ENCODE measurements at regions of chr20 and their contacts with region 1.

Region 1: GRCh38 chr20:32902456-32903420 is 44.0 kb downstream of the EFCAB8 start:
- DNase-seq: peak; percentile 84
- CTCF ChIP-seq: peak; percentile 87

Region 2: DNA sequence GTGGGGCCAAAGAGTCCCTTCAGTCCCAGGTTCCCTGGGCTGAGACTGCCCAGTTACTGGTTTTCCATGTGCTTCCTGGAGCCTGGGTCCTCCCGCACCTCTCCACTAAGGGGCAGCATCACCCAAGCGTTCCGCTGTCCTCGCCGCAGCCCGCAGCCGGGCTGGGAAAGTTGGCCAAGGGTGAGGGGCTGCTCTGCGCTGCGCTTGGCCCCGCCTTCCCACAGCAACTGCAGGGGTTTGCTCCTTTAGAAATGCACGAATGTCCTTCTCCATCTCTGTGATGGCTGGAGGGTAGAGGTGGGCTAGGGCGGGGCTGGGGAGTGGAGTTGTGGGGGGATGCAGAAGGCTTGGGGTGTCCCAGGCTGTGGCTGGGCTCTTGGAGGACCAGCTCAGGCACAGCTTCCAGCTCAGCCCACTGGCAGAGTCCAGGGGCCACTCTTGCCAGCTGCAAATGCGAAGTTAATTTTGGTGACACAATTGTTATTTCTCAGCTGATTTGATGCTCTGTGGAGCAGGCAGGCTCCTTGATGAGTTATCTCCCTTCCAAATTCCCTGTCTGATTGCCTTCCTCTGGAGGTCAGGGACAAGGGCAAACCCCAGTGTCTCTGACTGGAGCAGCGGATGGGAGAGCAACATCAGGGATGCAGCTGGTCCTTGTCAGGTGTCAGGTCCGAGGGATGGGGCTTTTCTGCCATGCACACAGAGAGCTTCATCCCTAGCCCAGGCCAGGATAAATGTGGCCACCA is 380.8 kb before region 1 on chr20:
- in situ Hi-C with region 1: no loop called
- DNase-seq: peak; percentile 85
- CTCF ChIP-seq: peak; percentile 85

Region 3: GRCh38 chr20:32636283-32636682 is 266.5 kb before region 1 on chr20:
- in situ Hi-C with region 1: no loop called
- DNase-seq: no peak
- CTCF ChIP-seq: no peak

Region 4: GRCh38 chr20:33097001-33097400 is 194.3 kb after region 1 on chr20:
- in situ Hi-C with region 1: loop called (anchors 10 kb)
- DNase-seq: no peak
- CTCF ChIP-seq: no peak